B cell (primary cell): ENCODE measurements at regions of chr10 and their contacts with region 1.

Region 1: GRCh38 chr10:49592726-49593563 is 17.2 kb upstream of the SLC18A3 start:
- DNase-seq: peak; percentile 67
- ATAC-seq: peak; percentile 79
- H3K4me3 ChIP-seq: no peak overlapping the region
- H3K4me3 Mint-ChIP-seq: no peak overlapping the region
- H3K27ac ChIP-seq: no peak overlapping the region
- H3K27ac Mint-ChIP-seq: no peak overlapping the region
- H3K4me1 ChIP-seq: peaks cover 0 to 2% of the 10 kb centered on the region in 2 donors
- H3K4me1 Mint-ChIP-seq: peaks cover 3% of the 10 kb centered on the region
- H3K27me3 ChIP-seq: peaks cover 0 to 8% (median 1%) of the 10 kb centered on the region in 4 experiments
- H3K27me3 Mint-ChIP-seq: peaks cover 25% of the 10 kb centered on the region
- CTCF ChIP-seq: peak; percentile 92

Region 2: DNA sequence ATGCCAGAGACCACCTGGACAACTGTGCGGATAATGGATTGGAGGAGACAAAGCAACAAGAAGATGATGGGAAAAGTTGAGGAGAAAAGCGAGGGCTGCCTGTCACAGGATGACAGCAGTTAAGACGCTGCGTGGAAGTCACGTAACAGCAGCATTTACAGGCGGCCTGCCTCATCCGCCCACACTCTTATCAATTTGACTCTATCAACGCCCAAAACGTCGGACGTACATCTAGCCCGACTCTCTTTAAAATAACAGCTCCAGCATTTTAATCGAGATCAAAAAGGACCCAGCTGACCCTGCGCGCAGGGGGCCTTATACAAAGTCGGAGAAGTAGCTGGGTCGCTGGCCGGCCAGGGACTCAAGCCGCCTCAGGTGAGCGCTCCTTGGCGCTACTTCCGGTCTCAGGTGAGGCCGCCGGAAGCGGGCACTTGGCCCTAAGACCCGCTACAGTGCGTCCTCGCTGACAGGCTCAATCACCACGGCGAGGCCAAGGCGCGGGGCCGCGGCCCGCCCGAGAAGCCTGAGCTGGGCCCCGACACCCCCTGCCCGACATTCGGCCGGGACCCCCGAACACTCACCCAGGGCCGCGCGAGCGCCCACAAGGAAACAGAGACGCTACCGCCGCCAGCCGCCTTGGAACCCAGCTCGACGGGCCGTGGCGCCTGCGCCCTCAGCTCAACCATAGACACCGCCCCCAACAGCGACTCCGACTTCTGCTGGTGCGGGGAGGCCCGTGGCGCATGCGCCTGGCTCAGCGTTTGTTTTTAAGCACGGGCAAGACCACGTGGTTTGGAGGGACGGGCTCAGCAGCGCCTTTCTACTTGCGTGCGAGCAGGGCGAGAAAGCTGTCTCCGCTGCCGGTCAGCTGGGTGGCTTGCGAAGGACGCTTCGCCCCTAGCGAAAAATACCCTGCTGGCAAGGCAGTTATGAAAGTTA is 54.3 kb before region 1 on chr10 and contains the start of gene ERCC6:
- CTCF ChIA-PET with region 1: interaction called, 10 read pairs
- POLR2A ChIA-PET with region 1: no interaction called
- intact Hi-C with region 1: no loop called
- DNase-seq: peak; percentile 97
- ATAC-seq: peak; percentile 87
- H3K4me3 ChIP-seq: peak within 1 kb of the TSS; percentile 75 to 93 (median 83)
- H3K4me3 Mint-ChIP-seq: peak within 1 kb of the TSS; percentile 86
- H3K27ac ChIP-seq: peak within 1 kb of the TSS; percentile 84 to 89
- H3K27ac Mint-ChIP-seq: peak within 1 kb of the TSS; percentile 95
- H3K4me1 ChIP-seq: peaks cover 19 to 35% of the 10 kb centered on the region in 2 donors
- H3K4me1 Mint-ChIP-seq: peaks cover 53% of the 10 kb centered on the region
- H3K27me3 ChIP-seq: peaks cover 0 to 11% (median 2%) of the 10 kb centered on the region in 4 experiments
- H3K27me3 Mint-ChIP-seq: peaks cover 13% of the 10 kb centered on the region
- CTCF ChIP-seq: no peak
- total RNA-seq, gene ERCC6: 59.8 and 65.9 TPM in 2 replicates

Region 3: DNA sequence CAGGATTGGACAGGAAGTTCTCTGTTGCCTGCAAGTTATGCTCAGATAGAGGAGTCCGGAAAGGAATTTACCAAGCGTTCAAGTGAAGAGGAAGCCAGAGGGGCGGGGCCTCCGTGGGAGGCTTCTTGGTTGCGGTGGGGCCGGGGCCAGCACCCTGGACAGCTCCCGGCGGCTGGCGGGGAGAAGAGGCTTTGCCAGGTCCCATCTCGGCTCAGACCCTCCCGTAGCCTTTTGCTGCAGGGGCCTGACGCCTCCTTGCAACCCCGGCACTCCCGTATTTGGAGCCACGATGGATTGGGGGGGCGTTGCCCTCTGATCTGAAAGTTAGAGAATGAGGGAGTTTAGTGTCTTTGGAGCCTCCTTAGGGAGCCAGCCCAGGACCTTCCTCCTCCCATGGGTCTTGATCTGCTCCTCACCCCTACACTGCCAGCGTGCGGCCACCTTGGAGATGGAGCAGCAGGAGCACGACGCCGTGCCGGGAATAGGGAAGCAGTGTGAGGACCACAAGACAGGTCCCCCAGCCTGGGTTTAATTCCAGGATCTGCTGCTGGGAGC is 14.1 kb after region 1 on chr10:
- CTCF ChIA-PET with region 1: interaction called, 19 read pairs
- POLR2A ChIA-PET with region 1: no interaction called
- intact Hi-C with region 1: no loop called
- DNase-seq: peak; percentile 61
- ATAC-seq: peak; percentile 53
- H3K4me3 ChIP-seq: no peak overlapping the region
- H3K4me3 Mint-ChIP-seq: no peak overlapping the region
- H3K27ac ChIP-seq: no peak overlapping the region
- H3K27ac Mint-ChIP-seq: no peak overlapping the region
- H3K4me1 ChIP-seq: peaks cover 0 to 7% of the 10 kb centered on the region in 2 donors
- H3K4me1 Mint-ChIP-seq: peaks cover 6% of the 10 kb centered on the region
- H3K27me3 ChIP-seq: peaks cover 0 to 55% (median 26%) of the 10 kb centered on the region in 4 experiments
- H3K27me3 Mint-ChIP-seq: peaks cover 63% of the 10 kb centered on the region
- CTCF ChIP-seq: no peak